WTC11 (cell line): ENCODE measurements at regions of chr4 and their contacts with region 1.

Region 1: GRCh38 chr4:9931146-9931545 is 90.2 kb downstream of the SLC2A9 start:
- DNase-seq: no peak
- ATAC-seq: no peak
- H3K4me3 Mint-ChIP-seq: no peak overlapping the region
- H3K27ac Mint-ChIP-seq: no peak overlapping the region
- H3K4me1 Mint-ChIP-seq: peaks cover 17% of the 10 kb centered on the region
- H3K27me3 Mint-ChIP-seq: peaks cover 8% of the 10 kb centered on the region
- CTCF ChIP-seq: no peak

Region 2: DNA sequence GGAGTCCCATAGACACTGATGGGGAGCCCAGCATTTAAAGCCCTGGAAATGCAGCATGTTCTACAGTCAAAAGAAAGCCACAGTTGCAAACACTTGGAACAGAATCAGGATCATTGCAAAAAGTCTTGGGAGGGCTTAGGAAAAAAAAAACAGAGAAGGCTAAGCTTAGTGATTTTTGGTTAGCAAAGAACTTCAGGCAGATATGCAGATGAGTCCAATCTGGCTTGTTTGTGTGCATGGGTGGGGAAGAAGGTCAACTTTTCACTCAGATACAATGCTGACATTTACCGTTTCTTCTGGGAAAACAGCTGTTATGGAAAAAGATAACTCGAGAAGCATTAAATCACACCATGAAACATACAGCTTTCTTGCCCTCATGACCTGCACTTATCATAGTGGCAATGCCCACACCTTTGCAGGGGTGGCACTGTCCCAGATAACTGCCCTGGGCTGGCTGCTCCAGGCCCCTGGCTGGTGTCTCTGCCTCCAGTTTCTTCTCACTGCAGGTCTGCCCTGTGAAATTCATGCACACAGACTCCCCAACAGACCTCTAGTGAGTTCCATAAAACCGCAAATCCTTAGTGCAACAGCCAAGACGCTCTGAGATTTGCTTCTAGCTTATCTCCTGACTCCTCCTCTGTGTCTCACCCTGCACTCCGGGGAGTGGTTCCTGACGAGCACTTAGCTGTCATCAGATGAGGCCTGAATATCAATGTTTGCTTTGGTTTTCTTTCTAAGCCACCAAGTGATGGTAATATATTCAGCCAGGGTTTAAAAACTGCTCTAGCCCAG is 50.5 kb before region 1 on chr4:
- CTCF ChIA-PET with region 1: no interaction called
- POLR2A ChIA-PET with region 1: no interaction called
- DNase-seq: no peak
- ATAC-seq: no peak
- H3K4me3 Mint-ChIP-seq: no peak overlapping the region
- H3K27ac Mint-ChIP-seq: no peak overlapping the region
- H3K4me1 Mint-ChIP-seq: peaks cover 39% of the 10 kb centered on the region
- H3K27me3 Mint-ChIP-seq: no peaks in the 10 kb centered on the region
- CTCF ChIP-seq: no peak

Region 3: GRCh38 chr4:9891740-9892379 is 39.3 kb before region 1 on chr4:
- CTCF ChIA-PET with region 1: no interaction called
- POLR2A ChIA-PET with region 1: no interaction called
- DNase-seq: no peak
- ATAC-seq: no peak; the same call in 1 of the 2 replicates
- H3K4me3 Mint-ChIP-seq: no peak overlapping the region
- H3K27ac Mint-ChIP-seq: no peak overlapping the region
- H3K4me1 Mint-ChIP-seq: peaks cover 8% of the 10 kb centered on the region
- H3K27me3 Mint-ChIP-seq: peaks cover 4% of the 10 kb centered on the region
- CTCF ChIP-seq: no peak

Region 4: GRCh38 chr4:9919047-9919446 is 12.1 kb before region 1 on chr4:
- CTCF ChIA-PET with region 1: interaction called, 10 read pairs
- POLR2A ChIA-PET with region 1: interaction called, 3 read pairs
- DNase-seq: peak; percentile 41
- ATAC-seq: peak; percentile 90
- H3K4me3 Mint-ChIP-seq: no peak overlapping the region
- H3K27ac Mint-ChIP-seq: no peak overlapping the region
- H3K4me1 Mint-ChIP-seq: peaks cover 20% of the 10 kb centered on the region
- H3K27me3 Mint-ChIP-seq: no peaks in the 10 kb centered on the region
- CTCF ChIP-seq: no peak

Region 5: DNA sequence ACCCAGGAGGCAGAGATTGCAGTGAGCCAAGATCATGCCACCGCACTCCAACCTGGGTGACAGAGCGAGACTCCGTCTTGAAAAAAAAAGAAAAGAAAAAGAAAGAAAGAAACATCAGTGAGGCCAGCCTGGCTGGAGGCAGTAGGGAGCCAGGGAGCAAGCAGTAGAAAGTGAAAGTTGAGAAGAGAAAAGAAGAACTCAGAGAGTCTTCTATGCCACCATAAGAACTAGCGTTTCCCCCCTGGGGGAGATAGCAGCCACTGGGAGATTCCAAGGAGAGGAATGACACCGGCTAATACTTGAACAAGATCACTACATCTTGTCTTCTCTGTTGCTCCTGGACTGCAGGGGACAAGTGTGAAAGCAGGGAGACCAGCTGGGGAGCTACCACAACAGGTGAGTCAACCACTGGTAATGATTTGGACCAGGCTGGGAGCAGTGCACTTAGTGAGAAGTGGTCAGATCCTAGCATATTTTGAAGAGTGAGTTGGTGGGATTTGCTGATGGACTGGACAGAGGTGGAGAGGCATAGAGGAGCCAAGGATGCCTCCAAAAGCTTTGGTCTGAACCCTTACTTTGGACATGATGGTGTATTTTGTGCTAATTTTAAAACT is 56.7 kb after region 1 on chr4:
- CTCF ChIA-PET with region 1: no interaction called
- POLR2A ChIA-PET with region 1: no interaction called
- DNase-seq: no peak
- ATAC-seq: no peak
- H3K4me3 Mint-ChIP-seq: no peak overlapping the region
- H3K27ac Mint-ChIP-seq: no peak overlapping the region
- H3K4me1 Mint-ChIP-seq: no peaks in the 10 kb centered on the region
- H3K27me3 Mint-ChIP-seq: peaks cover 4% of the 10 kb centered on the region
- CTCF ChIP-seq: no peak